ENCODE measurements at regions of chr3 and their contacts with region 1.

Region 1: DNA sequence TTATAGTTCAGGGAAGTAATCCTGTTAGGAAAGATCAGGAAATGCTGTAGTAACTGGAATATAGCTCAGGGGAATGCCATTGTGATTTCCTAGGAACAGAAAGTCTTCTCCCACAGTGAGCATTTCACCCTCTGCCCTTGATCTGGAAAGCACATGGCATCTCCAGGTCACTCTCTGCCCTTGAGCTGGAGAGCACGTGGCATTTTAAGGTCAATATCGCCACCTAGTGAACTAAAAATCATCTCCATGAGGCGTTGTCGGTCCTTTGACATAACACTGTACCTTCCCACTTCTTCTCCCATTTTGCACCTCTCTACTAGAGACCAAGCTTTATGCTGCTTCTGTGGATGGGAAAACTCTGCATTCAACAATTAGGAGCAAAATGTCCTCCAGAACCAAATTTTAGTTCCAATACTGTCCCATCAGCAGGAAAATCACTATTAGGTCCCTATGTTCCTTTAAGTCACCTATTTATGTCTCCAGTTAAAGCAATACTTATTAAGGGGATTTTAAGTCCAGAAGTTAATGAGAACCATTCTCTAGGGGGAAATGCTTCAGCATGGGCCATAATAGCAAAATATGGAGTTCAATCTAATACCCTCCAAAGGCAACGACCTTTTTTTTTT is 54.7 kb upstream of the GK5 start:
- DNase-seq: no peak
- ATAC-seq: peak; percentile 92

Region 2: GRCh38 chr3:142129516-142130171 is 150.4 kb before region 1 on chr3:
- intact Hi-C with region 1: loop called (anchors 2 kb)
- DNase-seq: no peak
- ATAC-seq: no peak